ENCODE measurements at regions of chr1 and their contacts with region 1.

Region 1: GRCh38 chr1:117895482-117896114 is 33.8 kb downstream of the GDAP2 start:
- DNase-seq: peak; percentile 61
- H3K4me3 ChIP-seq: no peak overlapping the region
- H3K27ac ChIP-seq: no peak overlapping the region
- H3K4me1 ChIP-seq: no peaks in the 10 kb centered on the region
- H3K27me3 ChIP-seq: no peaks in the 10 kb centered on the region
- CTCF ChIP-seq: peak; percentile 31 to 67 (median 58)
- POLR2A ChIP-seq: no peak

Region 2: GRCh38 chr1:117512743-117513321 is 382.8 kb before region 1 on chr1:
- intact Hi-C with region 1: loop called (anchors 5 kb)
- DNase-seq: no peak
- H3K4me3 ChIP-seq: no peak overlapping the region
- H3K27ac ChIP-seq: no peak overlapping the region
- H3K4me1 ChIP-seq: no peaks in the 10 kb centered on the region
- H3K27me3 ChIP-seq: no peaks in the 10 kb centered on the region
- CTCF ChIP-seq: peak; percentile 13 to 70 (median 54)
- POLR2A ChIP-seq: no peak

Region 3: GRCh38 chr1:117534995-117535467 is 360.6 kb before region 1 on chr1:
- intact Hi-C with region 1: loop called (anchors 5 kb)
- DNase-seq: peak; percentile 58
- H3K4me3 ChIP-seq: no peak overlapping the region
- H3K27ac ChIP-seq: no peak overlapping the region
- H3K4me1 ChIP-seq: no peaks in the 10 kb centered on the region
- H3K27me3 ChIP-seq: no peaks in the 10 kb centered on the region
- CTCF ChIP-seq: peak; percentile 34 to 90 (median 70)
- POLR2A ChIP-seq: no peak

Region 4: DNA sequence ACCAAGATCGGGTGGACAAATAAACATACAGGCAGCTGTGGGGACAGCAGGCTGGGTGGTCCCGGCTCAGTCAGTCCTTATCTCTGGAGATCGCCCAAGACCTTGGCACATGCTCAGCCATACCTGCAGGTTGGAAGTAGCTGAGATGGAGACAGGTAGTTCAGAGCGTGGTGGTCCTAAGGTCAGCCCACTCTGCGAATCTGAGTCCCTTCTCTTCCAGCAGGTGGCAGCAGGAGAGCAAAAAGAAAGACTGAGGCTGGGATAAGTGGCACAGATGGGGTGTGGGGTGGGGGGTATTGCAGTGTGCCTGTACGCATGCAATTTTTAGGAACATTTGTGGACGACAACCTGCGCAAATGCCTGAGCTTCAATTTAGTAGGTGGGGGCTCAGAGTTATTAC is 184.9 kb before region 1 on chr1:
- intact Hi-C with region 1: no loop called
- DNase-seq: no peak
- H3K4me3 ChIP-seq: no peak overlapping the region
- H3K27ac ChIP-seq: no peak overlapping the region
- H3K4me1 ChIP-seq: no peaks in the 10 kb centered on the region
- H3K27me3 ChIP-seq: no peaks in the 10 kb centered on the region
- CTCF ChIP-seq: no peak
- POLR2A ChIP-seq: no peak

Region 5: GRCh38 chr1:117814856-117815797 is 80.5 kb before region 1 on chr1:
- intact Hi-C with region 1: loop called (anchors 5 kb)
- DNase-seq: no peak
- H3K4me3 ChIP-seq: no peak overlapping the region
- H3K27ac ChIP-seq: no peak overlapping the region
- H3K4me1 ChIP-seq: no peaks in the 10 kb centered on the region
- H3K27me3 ChIP-seq: no peaks in the 10 kb centered on the region
- CTCF ChIP-seq: no peak
- POLR2A ChIP-seq: no peak